ENCODE measurements at regions of chr1 and their contacts with region 1.

Region 1: DNA sequence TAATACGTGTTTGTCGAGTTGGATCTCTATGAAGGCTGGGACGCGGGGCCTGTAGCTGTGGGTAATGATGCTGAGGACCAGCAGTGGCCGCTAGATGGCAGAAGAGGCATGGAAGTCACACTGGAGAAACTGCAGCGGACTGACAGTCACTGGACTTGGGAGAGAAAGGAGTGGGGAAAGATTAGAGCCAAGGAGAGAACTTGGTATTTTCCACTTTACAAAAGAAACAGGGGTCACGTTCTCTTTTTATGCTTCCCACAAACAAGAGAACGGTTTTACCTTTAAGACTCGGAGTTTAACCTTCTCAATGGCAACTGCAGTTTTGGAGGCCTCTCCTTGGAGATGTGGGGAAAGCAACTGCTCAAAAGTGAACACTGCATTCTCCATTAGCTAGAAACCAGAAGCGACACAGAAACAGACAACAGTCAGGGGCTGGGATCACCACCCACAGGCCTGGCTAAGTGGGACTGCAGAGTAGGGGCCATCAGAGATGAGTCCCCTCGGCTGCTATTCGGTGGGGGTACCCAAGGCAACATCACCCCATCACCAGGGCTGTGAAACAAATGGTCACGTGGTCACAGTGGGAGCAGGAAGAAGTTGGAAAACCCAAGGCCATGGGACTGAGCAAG is 51.1 kb upstream of the EDEM3 start:
- H3K4me3 ChIP-seq: no peak overlapping the region
- H3K27ac ChIP-seq: no peak overlapping the region
- H3K4me1 ChIP-seq: no peaks in the 10 kb centered on the region
- CTCF ChIP-seq: peak; percentile 91

Region 2: GRCh38 chr1:184792450-184792969 is 13.3 kb before region 1 on chr1:
- CTCF ChIA-PET with region 1: interaction called, 15 read pairs
- POLR2A ChIA-PET with region 1: no interaction called
- H3K4me3 ChIP-seq: no peak overlapping the region
- H3K27ac ChIP-seq: no peak overlapping the region
- H3K4me1 ChIP-seq: no peaks in the 10 kb centered on the region
- CTCF ChIP-seq: no peak

Region 3: DNA sequence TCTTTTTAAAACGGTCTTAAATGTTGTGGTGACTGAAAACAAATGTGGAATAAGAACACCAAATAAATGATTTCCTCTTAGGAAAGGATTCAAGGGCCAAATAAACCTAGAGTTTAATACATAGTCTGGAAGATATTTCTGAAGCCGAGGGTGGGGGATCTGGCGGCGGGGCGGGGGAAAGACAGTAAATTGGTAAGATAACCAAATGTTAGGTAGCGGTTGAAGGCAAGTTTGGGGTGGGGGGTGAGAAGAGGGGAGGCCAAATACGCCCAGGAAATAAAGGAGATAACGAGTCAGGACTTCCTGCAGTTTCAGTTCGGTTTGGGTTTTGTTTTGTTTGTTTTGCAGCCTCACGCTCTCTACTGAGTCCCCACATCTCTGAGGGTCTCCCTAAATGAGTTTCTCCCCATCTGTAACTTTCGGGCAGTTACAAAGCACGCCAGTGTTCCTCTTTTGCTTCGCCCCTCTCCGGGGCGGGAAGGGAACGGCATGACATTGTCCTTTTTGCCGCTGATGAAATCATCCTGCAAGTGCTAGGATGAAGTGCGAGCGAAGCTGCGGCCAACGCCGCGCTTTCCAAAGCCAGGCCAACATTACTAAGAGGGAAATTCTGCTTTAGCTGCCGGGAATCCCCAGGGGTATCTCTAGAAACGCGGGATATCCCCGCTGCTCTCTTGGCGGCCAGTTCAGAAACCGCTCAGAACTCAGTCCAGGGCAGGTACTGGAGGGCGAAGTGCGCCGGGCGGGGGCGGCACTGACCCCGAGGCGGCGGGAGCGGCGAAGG is 167.7 kb after region 1 on chr1:
- CTCF ChIA-PET with region 1: interaction called, 35 read pairs
- POLR2A ChIA-PET with region 1: no interaction called
- H3K4me3 ChIP-seq: peak overlapping the region; percentile 62
- H3K27ac ChIP-seq: peak overlapping the region; percentile 65; the same call in 1 of the 2 replicates
- H3K4me1 ChIP-seq: no peaks in the 10 kb centered on the region; the same call in 1 of the 2 replicates
- CTCF ChIP-seq: 0 out of 2 replicates have a peak, but pooled peaks have one; percentile 33

Region 4: GRCh38 chr1:184982002-184982954 is 176.5 kb after region 1 on chr1:
- CTCF ChIA-PET with region 1: interaction called, 123 read pairs
- POLR2A ChIA-PET with region 1: no interaction called
- H3K4me3 ChIP-seq: no peak overlapping the region
- H3K27ac ChIP-seq: no peak overlapping the region
- H3K4me1 ChIP-seq: no peaks in the 10 kb centered on the region
- CTCF ChIP-seq: peak; percentile 82

Region 5: DNA sequence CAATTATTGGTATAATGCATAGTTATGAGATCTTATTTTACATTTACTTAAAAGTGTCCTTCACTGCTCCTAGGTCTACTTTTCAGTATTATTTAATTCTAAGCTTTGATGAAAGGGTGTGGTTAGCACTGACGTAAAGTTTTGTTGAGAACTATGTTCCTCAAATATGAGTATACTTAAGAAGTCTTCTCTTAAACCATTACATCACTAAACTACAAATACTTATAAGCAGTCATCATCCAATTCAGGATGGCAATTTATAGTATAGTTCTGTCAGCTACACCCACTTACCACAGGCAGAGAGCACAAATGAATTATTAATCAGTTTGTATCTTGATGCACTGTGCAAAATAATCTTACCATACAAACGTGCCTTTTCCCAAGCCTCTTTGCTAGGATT is 323.9 kb after region 1 on chr1:
- CTCF ChIA-PET with region 1: no interaction called
- POLR2A ChIA-PET with region 1: no interaction called
- H3K4me3 ChIP-seq: no peak overlapping the region
- H3K27ac ChIP-seq: no peak overlapping the region
- H3K4me1 ChIP-seq: no peaks in the 10 kb centered on the region
- CTCF ChIP-seq: no peak

Measured in HEK293 (cell line).